ENCODE measurements at regions of chr12 and their contacts with region 1.

Region 1: GRCh38 chr12:126747530-126748149 is 1519.3 kb upstream of the TMEM132C start:
- DNase-seq: peak in 7 of 9 donors; percentile 18 to 63 (median 40)
- ATAC-seq: peak; percentile 72
- H3K4me3 ChIP-seq: no peak overlapping the region
- H3K4me3 Mint-ChIP-seq: no peak overlapping the region
- H3K27ac ChIP-seq: no peak overlapping the region
- H3K27ac Mint-ChIP-seq: no peak overlapping the region
- H3K4me1 ChIP-seq: no peaks in the 10 kb centered on the region
- H3K4me1 Mint-ChIP-seq: peaks cover 0 to 4% (median 0%) of the 10 kb centered on the region in 7 donors
- H3K27me3 ChIP-seq: no peaks in the 10 kb centered on the region
- H3K27me3 Mint-ChIP-seq: no peaks in the 10 kb centered on the region

Region 2: GRCh38 chr12:126069549-126070165 is 678.0 kb before region 1 on chr12:
- CTCF ChIA-PET with region 1: no interaction called
- POLR2A ChIA-PET with region 1: no interaction called
- intact Hi-C with region 1: loop called in 1 of 2 experiments (anchors 1 kb)
- DNase-seq: peak in 4 of 9 donors; percentile 1 to 38 (median 9)
- ATAC-seq: no peak
- H3K4me3 ChIP-seq: no peak overlapping the region
- H3K4me3 Mint-ChIP-seq: no peak overlapping the region
- H3K27ac ChIP-seq: no peak overlapping the region
- H3K27ac Mint-ChIP-seq: no peak overlapping the region
- H3K4me1 ChIP-seq: no peaks in the 10 kb centered on the region
- H3K4me1 Mint-ChIP-seq: no peaks in the 10 kb centered on the region
- H3K27me3 ChIP-seq: no peaks in the 10 kb centered on the region
- H3K27me3 Mint-ChIP-seq: no peaks in the 10 kb centered on the region

Region 3: DNA sequence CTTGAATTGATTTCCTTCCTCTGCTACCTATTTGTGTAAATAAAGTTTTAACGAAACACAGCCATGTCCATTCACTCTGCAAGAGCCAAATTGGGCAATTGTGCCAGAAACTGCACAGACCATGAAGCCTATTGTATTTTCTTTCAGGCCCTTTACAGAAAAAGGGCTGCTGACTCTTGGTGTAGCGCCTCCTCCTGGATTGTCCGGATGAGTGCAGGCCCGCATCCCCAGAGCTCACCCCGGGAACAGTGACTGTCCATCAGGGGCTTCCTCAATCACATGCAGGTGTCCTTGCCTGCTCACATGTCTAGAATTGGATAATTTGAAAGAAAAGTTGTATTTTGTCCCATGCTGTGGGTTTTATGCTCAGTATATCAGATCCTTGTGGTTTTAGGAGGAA is 400.2 kb before region 1 on chr12:
- CTCF ChIA-PET with region 1: no interaction called
- POLR2A ChIA-PET with region 1: no interaction called
- intact Hi-C with region 1: loop called in 1 of 2 experiments (anchors 5 kb)
- DNase-seq: no peak
- ATAC-seq: no peak
- H3K4me3 ChIP-seq: no peak overlapping the region
- H3K4me3 Mint-ChIP-seq: peak overlapping the region in 2 of 10 donors; percentile 10 to 29
- H3K27ac ChIP-seq: no peak overlapping the region
- H3K27ac Mint-ChIP-seq: no peak overlapping the region
- H3K4me1 ChIP-seq: no peaks in the 10 kb centered on the region
- H3K4me1 Mint-ChIP-seq: peaks cover 0 to 21% (median 11%) of the 10 kb centered on the region in 7 donors
- H3K27me3 ChIP-seq: no peaks in the 10 kb centered on the region
- H3K27me3 Mint-ChIP-seq: no peaks in the 10 kb centered on the region

Region 4: DNA sequence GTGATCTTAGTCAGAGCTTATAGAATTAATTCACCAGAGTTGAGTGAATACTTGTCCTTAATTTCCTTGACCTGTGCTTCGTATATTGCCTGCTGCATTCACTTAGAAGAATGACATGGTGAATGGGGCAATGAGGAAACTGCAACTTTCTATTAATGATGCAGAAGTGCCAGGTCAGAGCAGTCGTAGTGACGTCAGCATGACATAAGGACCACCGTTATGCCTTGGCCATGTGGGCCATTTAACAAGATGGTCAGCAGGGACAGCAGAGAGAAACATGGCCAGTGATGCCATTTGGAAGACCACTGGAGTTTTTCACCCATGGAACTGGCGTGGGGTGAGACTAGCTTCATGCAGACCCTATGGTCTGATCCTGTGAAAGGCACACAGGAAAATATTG is 49.9 kb after region 1 on chr12:
- CTCF ChIA-PET with region 1: no interaction called
- POLR2A ChIA-PET with region 1: no interaction called
- intact Hi-C with region 1: no loop called
- DNase-seq: no peak
- ATAC-seq: no peak
- H3K4me3 ChIP-seq: no peak overlapping the region
- H3K4me3 Mint-ChIP-seq: no peak overlapping the region
- H3K27ac ChIP-seq: no peak overlapping the region
- H3K27ac Mint-ChIP-seq: no peak overlapping the region
- H3K4me1 ChIP-seq: no peaks in the 10 kb centered on the region
- H3K4me1 Mint-ChIP-seq: no peaks in the 10 kb centered on the region
- H3K27me3 ChIP-seq: no peaks in the 10 kb centered on the region
- H3K27me3 Mint-ChIP-seq: peaks cover 0 to 5% (median 0%) of the 10 kb centered on the region in 5 donors